Activated CD4-positive, alpha-beta memory T cell treated with anti-CD3 and anti-CD28 coated beads for 36 hours (primary cell): ENCODE measurements at regions of chr2 and their contacts with region 1.

Region 1: GRCh38 chr2:197011799-197012641 is 85.5 kb upstream of the PGAP1 start:
- DNase-seq: peak; percentile 20
- H3K4me3 Mint-ChIP-seq: no peak overlapping the region
- H3K27ac Mint-ChIP-seq: peak overlapping the region; percentile 26
- H3K4me1 Mint-ChIP-seq: no peaks in the 10 kb centered on the region
- H3K27me3 Mint-ChIP-seq: no peaks in the 10 kb centered on the region

Region 2: DNA sequence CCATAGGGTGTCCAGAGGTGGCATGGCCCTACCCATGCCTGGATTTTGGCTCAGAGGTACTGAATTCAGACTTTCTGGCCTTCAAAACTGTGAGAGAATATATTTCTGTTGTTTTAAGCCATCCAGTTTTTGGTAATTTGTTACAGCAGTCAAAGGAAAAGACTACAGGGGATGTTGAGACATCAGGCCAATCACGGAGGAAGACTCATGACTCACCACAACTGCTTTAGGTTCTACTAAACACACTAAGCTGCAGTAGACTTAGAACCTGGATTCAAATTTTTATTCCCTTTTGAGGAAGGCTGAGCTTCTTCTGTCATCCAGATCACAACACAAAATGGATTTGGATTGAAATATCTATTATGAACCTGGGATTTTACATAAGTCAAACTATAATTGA is 190.8 kb before region 1 on chr2:
- CTCF ChIA-PET with region 1: no interaction called
- POLR2A ChIA-PET with region 1: no interaction called
- intact Hi-C with region 1: no loop called
- DNase-seq: no peak
- H3K4me3 Mint-ChIP-seq: no peak overlapping the region
- H3K27ac Mint-ChIP-seq: no peak overlapping the region
- H3K4me1 Mint-ChIP-seq: no peaks in the 10 kb centered on the region
- H3K27me3 Mint-ChIP-seq: peaks cover 16% of the 10 kb centered on the region

Region 3: GRCh38 chr2:197092431-197092830 is 80.4 kb after region 1 on chr2:
- CTCF ChIA-PET with region 1: no interaction called
- POLR2A ChIA-PET with region 1: no interaction called
- intact Hi-C with region 1: loop called (anchors 5 kb)
- DNase-seq: no peak
- H3K4me3 Mint-ChIP-seq: no peak overlapping the region
- H3K27ac Mint-ChIP-seq: no peak overlapping the region
- H3K4me1 Mint-ChIP-seq: peaks cover 4% of the 10 kb centered on the region
- H3K27me3 Mint-ChIP-seq: no peaks in the 10 kb centered on the region

Region 4: GRCh38 chr2:197668296-197668695 is 656.3 kb after region 1 on chr2:
- CTCF ChIA-PET with region 1: no interaction called
- POLR2A ChIA-PET with region 1: no interaction called
- intact Hi-C with region 1: no loop called
- DNase-seq: no peak
- H3K4me3 Mint-ChIP-seq: no peak overlapping the region
- H3K27ac Mint-ChIP-seq: no peak overlapping the region
- H3K4me1 Mint-ChIP-seq: no peaks in the 10 kb centered on the region
- H3K27me3 Mint-ChIP-seq: peaks cover 16% of the 10 kb centered on the region